Endothelial cell of umbilical vein (primary cell): ENCODE measurements at regions of chr13 and their contacts with region 1.

Region 1: GRCh38 chr13:77480066-77480465 is 55.4 kb upstream of the SCEL start:
- DNase-seq: no peak
- H3K4me3 ChIP-seq: no peak overlapping the region
- H3K27ac ChIP-seq: no peak overlapping the region
- H3K4me1 ChIP-seq: peaks cover 3% of the 10 kb centered on the region
- H3K27me3 ChIP-seq: peaks cover 3 to 12% of the 10 kb centered on the region in 2 experiments
- CTCF ChIP-seq: no peak
- POLR2A ChIP-seq: no peak

Region 2: GRCh38 chr13:76570510-76570971 is 909.5 kb before region 1 on chr13:
- CTCF ChIA-PET with region 1: no interaction called
- POLR2A ChIA-PET with region 1: no interaction called
- dilution Hi-C with region 1: no loop called
- intact Hi-C with region 1: no loop called
- DNase-seq: peak; percentile 9
- H3K4me3 ChIP-seq: no peak overlapping the region
- H3K27ac ChIP-seq: no peak overlapping the region
- H3K4me1 ChIP-seq: no peaks in the 10 kb centered on the region
- H3K27me3 ChIP-seq: no peaks in the 10 kb centered on the region
- CTCF ChIP-seq: no peak
- POLR2A ChIP-seq: no peak

Region 3: GRCh38 chr13:77026818-77027585 is 453.1 kb before region 1 on chr13 and contains the start of gene FBXL3:
- CTCF ChIA-PET with region 1: interaction called, 10 read pairs
- POLR2A ChIA-PET with region 1: no interaction called
- dilution Hi-C with region 1: no loop called
- intact Hi-C with region 1: loop called (anchors 2 kb)
- DNase-seq: peak; percentile 73
- H3K4me3 ChIP-seq: peak within 1 kb of the TSS; percentile 79 to 94 (median 80)
- H3K27ac ChIP-seq: peak within 1 kb of the TSS; percentile 87
- H3K4me1 ChIP-seq: peaks cover 33% of the 10 kb centered on the region
- H3K27me3 ChIP-seq: no peaks in the 10 kb centered on the region
- CTCF ChIP-seq: no peak
- POLR2A ChIP-seq: no peak
- total RNA-seq, gene FBXL3: 35.9 and 37.8 TPM in 2 replicates

Region 4: GRCh38 chr13:77184455-77184854 is 295.6 kb before region 1 on chr13:
- CTCF ChIA-PET with region 1: interaction called, 4 read pairs
- POLR2A ChIA-PET with region 1: no interaction called
- dilution Hi-C with region 1: no loop called
- intact Hi-C with region 1: loop called (anchors 10 kb)
- DNase-seq: peak; percentile 30
- H3K4me3 ChIP-seq: no peak overlapping the region
- H3K27ac ChIP-seq: no peak overlapping the region
- H3K4me1 ChIP-seq: peaks cover 13% of the 10 kb centered on the region
- H3K27me3 ChIP-seq: no peaks in the 10 kb centered on the region
- CTCF ChIP-seq: no peak
- POLR2A ChIP-seq: no peak

Region 5: DNA sequence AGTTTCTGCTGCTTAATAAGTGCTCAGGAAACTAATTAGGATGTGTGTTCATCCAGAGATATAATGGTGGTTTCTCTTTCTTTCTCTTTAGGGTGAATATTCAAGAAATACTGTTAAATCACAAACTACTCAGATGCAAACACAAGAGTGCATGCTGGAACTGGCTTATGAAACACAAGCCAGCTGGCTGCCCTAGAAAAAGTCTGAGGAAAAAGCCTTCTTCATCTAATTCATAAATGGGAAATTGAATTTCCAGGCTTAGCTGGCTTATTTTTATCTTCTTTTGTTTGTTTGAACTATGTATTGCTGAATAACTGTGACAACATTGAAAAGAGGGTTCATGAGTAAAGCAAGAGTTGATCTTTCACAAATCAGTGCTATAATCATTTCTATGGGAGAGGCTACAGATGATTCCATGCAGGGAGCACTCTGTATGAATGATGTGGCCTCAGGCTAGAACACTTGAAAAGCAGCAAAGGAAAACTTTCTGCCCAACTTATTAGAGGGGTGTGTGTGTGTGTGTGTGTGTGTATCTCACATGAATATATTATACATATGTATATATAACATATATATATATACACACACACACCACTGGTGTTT is 14.4 kb before region 1 on chr13:
- CTCF ChIA-PET with region 1: interaction called, 12 read pairs
- POLR2A ChIA-PET with region 1: no interaction called
- dilution Hi-C with region 1: no loop called
- intact Hi-C with region 1: no loop called
- DNase-seq: no peak
- H3K4me3 ChIP-seq: no peak overlapping the region
- H3K27ac ChIP-seq: no peak overlapping the region
- H3K4me1 ChIP-seq: no peaks in the 10 kb centered on the region
- H3K27me3 ChIP-seq: peaks cover 2 to 6% of the 10 kb centered on the region in 2 experiments
- CTCF ChIP-seq: no peak
- POLR2A ChIP-seq: no peak

Region 6: DNA sequence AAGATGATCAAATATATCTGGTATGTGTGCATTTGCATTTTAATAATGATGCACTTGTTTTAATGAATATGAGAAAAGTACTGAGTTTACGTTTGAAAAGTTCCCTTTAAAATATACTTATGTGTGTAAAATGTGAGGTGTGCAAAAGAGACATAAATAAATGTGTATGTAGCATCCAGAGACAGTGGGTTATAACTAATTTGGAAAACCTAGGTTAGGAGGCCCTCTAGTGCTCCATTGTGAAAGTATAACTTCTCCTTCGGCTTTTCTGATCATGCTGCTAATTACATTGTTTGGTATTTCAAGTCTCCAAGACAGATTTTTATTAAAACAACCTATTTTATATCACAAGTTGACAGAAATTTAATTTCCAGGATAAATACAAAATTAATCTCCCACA is 85.6 kb after region 1 on chr13:
- CTCF ChIA-PET with region 1: interaction called, 29 read pairs
- POLR2A ChIA-PET with region 1: no interaction called
- dilution Hi-C with region 1: no loop called
- intact Hi-C with region 1: loop called (anchors 1 kb)
- DNase-seq: peak; percentile 71
- H3K4me3 ChIP-seq: no peak overlapping the region
- H3K27ac ChIP-seq: no peak overlapping the region
- H3K4me1 ChIP-seq: no peaks in the 10 kb centered on the region
- H3K27me3 ChIP-seq: peaks cover 5 to 8% of the 10 kb centered on the region in 2 experiments
- CTCF ChIP-seq: peak; percentile 28 to 33
- POLR2A ChIP-seq: no peak

Region 7: DNA sequence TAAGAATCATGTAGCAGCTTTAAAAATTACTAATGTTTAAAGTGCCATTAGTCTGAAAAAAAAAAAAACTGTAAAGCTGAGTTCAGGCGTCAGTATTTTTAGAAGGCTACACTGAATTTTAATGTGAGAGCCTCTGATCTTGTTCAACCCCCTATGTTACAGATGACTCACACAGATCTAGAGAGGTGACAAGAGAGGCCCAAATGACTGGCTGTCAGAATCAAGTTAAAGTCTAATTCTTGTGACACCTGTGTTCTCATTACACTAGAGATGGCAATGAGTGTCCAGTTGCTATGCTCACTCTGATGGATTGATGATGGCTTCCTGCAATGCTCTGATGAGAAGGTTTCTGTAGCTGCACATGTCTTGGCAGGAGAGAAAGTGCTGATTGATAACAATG is 1382.4 kb after region 1 on chr13:
- CTCF ChIA-PET with region 1: no interaction called
- POLR2A ChIA-PET with region 1: no interaction called
- dilution Hi-C with region 1: no loop called
- intact Hi-C with region 1: no loop called
- DNase-seq: no peak
- H3K4me3 ChIP-seq: no peak overlapping the region
- H3K27ac ChIP-seq: no peak overlapping the region
- H3K4me1 ChIP-seq: no peaks in the 10 kb centered on the region
- H3K27me3 ChIP-seq: no peaks in the 10 kb centered on the region
- CTCF ChIP-seq: no peak
- POLR2A ChIP-seq: no peak